K562 (cell line): ENCODE measurements at regions of chrX and their contacts with region 1.

Region 1: DNA sequence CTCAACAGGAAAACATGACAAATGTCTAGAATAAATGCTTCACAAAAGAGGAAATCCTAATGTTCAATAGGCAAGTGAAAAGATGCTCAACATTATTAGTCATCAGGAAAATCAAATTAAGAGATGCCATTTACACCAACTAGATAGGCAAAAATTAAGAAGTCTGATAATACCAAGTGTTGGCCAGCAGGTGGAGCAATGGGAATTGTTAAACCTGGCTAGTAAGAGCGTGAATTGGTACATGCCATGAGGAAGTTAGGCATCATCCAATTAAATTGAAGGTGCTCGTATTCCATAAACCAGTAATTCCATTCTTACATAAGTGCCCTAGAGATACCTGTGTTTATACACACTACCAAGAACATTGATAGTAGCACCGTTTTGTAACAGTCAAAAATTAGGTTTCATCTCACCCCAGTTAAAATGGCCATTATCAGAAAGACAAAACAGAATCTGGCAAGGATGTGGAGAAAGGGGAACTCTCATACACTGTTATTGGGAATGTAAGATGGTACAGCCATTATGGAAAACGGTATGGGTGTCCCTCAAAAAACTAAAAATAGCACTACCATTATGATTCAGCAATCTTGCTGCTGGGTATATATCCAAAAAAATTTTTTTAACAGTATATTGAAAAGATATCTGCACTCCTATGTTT is 14.0 kb upstream of the ZCCHC18 start:
- DNase-seq: peak; percentile 31 to 65 (median 35)
- ATAC-seq: peak; percentile 64; the same call in 2 of the 3 replicates
- H3K4me3 ChIP-seq: no peak overlapping the region
- H3K27ac ChIP-seq: no peak overlapping the region
- H3K4me1 ChIP-seq: no peaks in the 10 kb centered on the region
- H3K27me3 ChIP-seq: no peaks in the 10 kb centered on the region
- CTCF ChIP-seq: peak; percentile 46 to 69 (median 50); a peak in 5 of 6 replicates
- EP300 ChIP-seq: no peak
- POLR2A ChIP-seq: no peak
- RAD21 ChIP-seq: peak; percentile 49 to 70

Region 2: DNA sequence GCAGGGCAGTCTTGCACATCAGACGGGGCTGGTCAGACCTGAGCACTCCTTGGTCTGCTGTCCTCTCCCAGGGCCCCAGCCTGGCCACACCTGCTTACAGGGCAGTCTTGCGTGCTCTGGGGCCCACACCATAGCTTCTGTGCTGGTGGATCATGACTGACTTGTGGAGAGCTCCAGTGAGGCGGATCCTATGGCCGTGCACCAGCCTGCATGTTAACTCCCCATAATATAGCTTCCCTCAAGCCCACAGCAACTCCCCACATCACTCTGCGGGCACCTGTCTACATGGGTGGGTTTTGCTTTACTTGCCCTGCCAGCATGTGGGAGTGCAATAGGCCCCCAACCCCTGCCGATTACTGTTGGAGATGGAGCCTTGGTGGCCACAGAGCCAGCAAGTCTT is 144.0 kb before region 1 on chrX:
- CTCF ChIA-PET with region 1: no interaction called
- POLR2A ChIA-PET with region 1: no interaction called
- in situ Hi-C with region 1: no loop called
- intact Hi-C with region 1: no loop called
- DNase-seq: no peak
- ATAC-seq: no peak
- H3K4me3 ChIP-seq: no peak overlapping the region
- H3K27ac ChIP-seq: no peak overlapping the region
- H3K4me1 ChIP-seq: no peaks in the 10 kb centered on the region
- H3K27me3 ChIP-seq: no peaks in the 10 kb centered on the region
- CTCF ChIP-seq: no peak
- EP300 ChIP-seq: no peak
- POLR2A ChIP-seq: no peak
- RAD21 ChIP-seq: no peak

Region 3: GRCh38 chrX:104136241-104137019 is 38.1 kb after region 1 on chrX:
- CTCF ChIA-PET with region 1: interaction called, 3 read pairs
- POLR2A ChIA-PET with region 1: no interaction called
- in situ Hi-C with region 1: no loop called
- intact Hi-C with region 1: loop called (anchors 2 kb)
- DNase-seq: peak; percentile 56 to 82 (median 61)
- ATAC-seq: peak; percentile 98
- H3K4me3 ChIP-seq: no peak overlapping the region
- H3K27ac ChIP-seq: no peak overlapping the region
- H3K4me1 ChIP-seq: no peaks in the 10 kb centered on the region
- H3K27me3 ChIP-seq: no peaks in the 10 kb centered on the region
- CTCF ChIP-seq: peak; percentile 67 to 71 (median 69)
- EP300 ChIP-seq: no peak
- POLR2A ChIP-seq: no peak
- RAD21 ChIP-seq: peak; percentile 30 to 67; a peak in 3 of 4 replicates